Naive thymus-derived CD4-positive, alpha-beta T cell (primary cell): ENCODE measurements at regions of chr11 and their contacts with region 1.

Region 1: DNA sequence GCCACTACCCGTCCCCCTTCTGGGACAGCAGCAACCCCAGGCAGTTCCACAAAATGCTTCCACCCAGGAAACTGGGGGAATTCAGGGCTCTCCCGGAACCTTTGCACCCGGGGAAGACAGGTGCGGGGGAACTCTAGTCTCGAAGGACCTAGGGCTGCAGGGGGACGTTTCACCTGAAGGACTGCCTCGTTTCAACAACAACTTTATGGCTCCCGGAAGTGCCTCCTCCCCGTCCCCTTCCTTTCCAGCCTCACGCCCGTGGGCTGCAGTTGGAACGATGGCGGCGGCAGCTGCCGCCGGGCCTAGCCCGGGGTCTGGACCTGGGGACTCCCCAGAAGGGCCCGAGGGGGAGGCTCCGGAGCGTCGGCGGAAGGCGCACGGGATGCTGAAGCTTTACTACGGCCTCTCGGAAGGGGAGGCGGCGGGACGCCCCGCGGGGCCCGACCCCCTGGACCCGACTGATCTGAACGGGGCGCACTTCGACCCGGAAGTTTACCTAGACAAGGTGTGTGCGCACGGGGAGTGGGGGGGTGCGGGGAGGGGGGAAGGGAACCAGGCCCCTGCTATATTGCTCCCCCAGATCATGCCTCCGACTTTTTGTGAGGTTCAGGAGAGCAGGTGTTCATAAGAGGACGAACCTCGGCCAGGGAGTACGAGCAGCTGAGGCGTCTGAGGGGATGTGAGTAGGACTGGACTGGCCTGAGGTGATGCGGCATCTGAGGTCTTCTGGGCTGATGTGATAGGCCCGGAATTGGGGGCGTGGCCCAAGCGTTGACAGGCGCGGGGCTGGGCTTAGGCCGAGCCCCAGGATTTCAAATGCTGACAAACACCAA is at the start of gene VPS51:
- DNase-seq: peak; percentile 71 to 92 (median 87)
- ATAC-seq: peak; percentile 93
- H3K4me3 ChIP-seq: peak within 1 kb of the TSS; percentile 92
- H3K4me3 Mint-ChIP-seq: peak within 1 kb of the TSS; percentile 83 to 97 (median 94)
- H3K27ac ChIP-seq: peak within 1 kb of the TSS; percentile 88
- H3K27ac Mint-ChIP-seq: peak within 1 kb of the TSS; percentile 89 to 98 (median 97)
- H3K4me1 ChIP-seq: peaks cover 9 to 15% of the 10 kb centered on the region in 2 donors
- H3K4me1 Mint-ChIP-seq: peaks cover 8 to 28% (median 19%) of the 10 kb centered on the region in 7 donors
- H3K27me3 ChIP-seq: no peaks in the 10 kb centered on the region
- H3K27me3 Mint-ChIP-seq: no peaks in the 10 kb centered on the region
- total RNA-seq, gene VPS51: 159 to 269 (median 256) TPM

Region 2: DNA sequence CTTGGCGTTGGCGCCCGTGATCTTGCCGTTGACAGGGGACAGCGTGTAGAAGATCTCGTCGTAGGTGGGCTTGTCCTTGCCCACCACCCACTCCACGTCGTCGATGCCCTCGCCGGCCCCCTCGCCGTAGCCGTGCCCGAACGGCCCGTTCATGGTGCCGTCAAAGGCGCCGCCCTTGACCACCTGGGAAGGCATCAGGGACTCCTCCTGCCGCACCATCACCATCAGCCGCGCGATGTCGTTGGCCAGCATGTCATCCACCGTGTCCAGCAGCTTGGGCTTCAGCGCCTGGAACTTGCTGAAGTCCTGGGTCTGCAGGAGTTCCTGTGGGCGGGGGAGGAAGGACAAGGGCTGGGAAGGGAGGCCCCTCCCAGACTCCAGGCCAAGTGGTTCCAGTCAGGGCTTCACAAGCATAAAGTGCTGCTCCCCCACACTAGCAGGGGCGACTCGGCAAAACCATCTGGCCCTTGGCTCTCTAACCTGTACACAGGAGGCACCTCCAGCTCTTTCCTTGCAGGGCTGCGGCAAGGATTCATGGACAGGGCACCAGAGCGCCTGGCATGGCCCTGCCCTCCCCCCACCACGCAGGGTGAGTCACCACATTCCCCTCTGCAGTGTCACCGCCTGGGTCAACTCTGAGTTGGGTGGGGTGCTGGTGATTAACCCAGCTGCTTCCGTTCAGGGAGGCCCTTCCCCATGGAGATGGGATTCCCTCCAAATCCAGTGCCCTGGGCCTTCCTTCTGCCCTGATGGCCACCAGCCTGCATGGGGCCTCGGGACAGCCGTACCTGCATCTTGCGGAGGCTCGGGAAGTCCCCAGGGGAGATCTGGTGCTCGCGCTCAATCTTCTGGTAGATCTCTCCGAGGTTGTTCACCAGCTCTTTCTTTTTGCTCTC is 241.4 kb before region 1 on chr11:
- CTCF ChIA-PET with region 1: no interaction called
- POLR2A ChIA-PET with region 1: no interaction called
- intact Hi-C with region 1: loop called in 1 of 2 experiments (anchors 5 kb)
- DNase-seq: no peak
- ATAC-seq: peak; percentile 35
- H3K4me3 ChIP-seq: no peak overlapping the region
- H3K4me3 Mint-ChIP-seq: peak overlapping the region; percentile 45 to 83 (median 73)
- H3K27ac ChIP-seq: peak overlapping the region; percentile 75
- H3K27ac Mint-ChIP-seq: peak overlapping the region; percentile 78 to 97 (median 93)
- H3K4me1 ChIP-seq: peaks cover 88 to 93% of the 10 kb centered on the region in 2 donors
- H3K4me1 Mint-ChIP-seq: peaks cover 44 to 94% (median 83%) of the 10 kb centered on the region in 7 donors
- H3K27me3 ChIP-seq: no peaks in the 10 kb centered on the region
- H3K27me3 Mint-ChIP-seq: no peaks in the 10 kb centered on the region

Region 3: GRCh38 chr11:65078151-65078550 is 18.0 kb before region 1 on chr11:
- CTCF ChIA-PET with region 1: interaction called, 3 read pairs
- POLR2A ChIA-PET with region 1: interaction called, 4 read pairs
- intact Hi-C with region 1: loop called in 1 of 2 experiments (anchors 2 kb)
- DNase-seq: peak; percentile 47 to 71 (median 64)
- ATAC-seq: peak; percentile 97
- H3K4me3 ChIP-seq: no peak overlapping the region
- H3K4me3 Mint-ChIP-seq: peak overlapping the region in 1 of 10 donors; percentile 48
- H3K27ac ChIP-seq: no peak overlapping the region
- H3K27ac Mint-ChIP-seq: peak overlapping the region; percentile 9 to 83 (median 63)
- H3K4me1 ChIP-seq: no peaks in the 10 kb centered on the region
- H3K4me1 Mint-ChIP-seq: peaks cover 3 to 48% (median 7%) of the 10 kb centered on the region in 7 donors
- H3K27me3 ChIP-seq: no peaks in the 10 kb centered on the region
- H3K27me3 Mint-ChIP-seq: no peaks in the 10 kb centered on the region

Region 4: GRCh38 chr11:65083834-65084597 is 12.2 kb before region 1 on chr11 and contains the starts of genes CDCA5 and ZFPL1:
- CTCF ChIA-PET with region 1: interaction called, 4 read pairs
- POLR2A ChIA-PET with region 1: interaction called, 11 read pairs
- intact Hi-C with region 1: loop called (anchors 1 kb)
- DNase-seq: peak; percentile 94 to 98 (median 97)
- ATAC-seq: peak; percentile 96
- H3K4me3 ChIP-seq: peak within 1 kb of the TSS; percentile 61
- H3K4me3 Mint-ChIP-seq: peak within 1 kb of the TSS; percentile 88 to 99 (median 93)
- H3K27ac ChIP-seq: peak within 1 kb of the TSS; percentile 86
- H3K27ac Mint-ChIP-seq: peak within 1 kb of the TSS; percentile 94 to 99 (median 97)
- H3K4me1 ChIP-seq: peaks cover 13 to 14% of the 10 kb centered on the region in 2 donors
- H3K4me1 Mint-ChIP-seq: peaks cover 20 to 49% (median 27%) of the 10 kb centered on the region in 7 donors
- H3K27me3 ChIP-seq: no peaks in the 10 kb centered on the region
- H3K27me3 Mint-ChIP-seq: peaks cover 0 to 4% (median 0%) of the 10 kb centered on the region in 5 donors
- total RNA-seq, gene CDCA5: 0.56 to 68.1 (median 0.81) TPM
- total RNA-seq, gene ZFPL1: 29.9 to 53.0 (median 49.3) TPM

Region 5: DNA sequence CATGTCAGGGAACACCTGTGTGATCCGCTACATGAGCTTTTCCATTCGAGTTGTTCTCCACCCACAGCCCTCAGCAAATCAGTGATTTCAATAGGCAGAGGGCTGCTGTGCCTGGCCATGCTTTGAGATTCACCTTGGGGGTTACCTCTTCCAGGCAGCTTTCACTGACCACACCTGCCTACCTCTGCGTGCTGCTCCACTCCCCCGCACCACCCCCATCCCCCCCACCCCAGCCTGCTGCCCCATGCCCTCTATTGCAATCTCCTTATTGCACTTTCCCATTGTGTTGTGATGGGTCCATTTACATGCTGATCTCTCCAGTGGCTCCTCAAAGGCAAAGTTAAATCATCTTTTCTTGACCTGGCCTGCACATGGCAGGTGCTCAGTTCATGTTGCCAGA is 147.6 kb after region 1 on chr11:
- CTCF ChIA-PET with region 1: no interaction called
- POLR2A ChIA-PET with region 1: no interaction called
- intact Hi-C with region 1: no loop called
- DNase-seq: no peak
- ATAC-seq: no peak
- H3K4me3 ChIP-seq: no peak overlapping the region
- H3K4me3 Mint-ChIP-seq: no peak overlapping the region
- H3K27ac ChIP-seq: no peak overlapping the region
- H3K27ac Mint-ChIP-seq: no peak overlapping the region
- H3K4me1 ChIP-seq: no peaks in the 10 kb centered on the region
- H3K4me1 Mint-ChIP-seq: no peaks in the 10 kb centered on the region
- H3K27me3 ChIP-seq: no peaks in the 10 kb centered on the region
- H3K27me3 Mint-ChIP-seq: peaks cover 0 to 3% (median 0%) of the 10 kb centered on the region in 5 donors